AG04449 (cell line): ENCODE measurements at regions of chr2 and their contacts with region 1.

Region 1: DNA sequence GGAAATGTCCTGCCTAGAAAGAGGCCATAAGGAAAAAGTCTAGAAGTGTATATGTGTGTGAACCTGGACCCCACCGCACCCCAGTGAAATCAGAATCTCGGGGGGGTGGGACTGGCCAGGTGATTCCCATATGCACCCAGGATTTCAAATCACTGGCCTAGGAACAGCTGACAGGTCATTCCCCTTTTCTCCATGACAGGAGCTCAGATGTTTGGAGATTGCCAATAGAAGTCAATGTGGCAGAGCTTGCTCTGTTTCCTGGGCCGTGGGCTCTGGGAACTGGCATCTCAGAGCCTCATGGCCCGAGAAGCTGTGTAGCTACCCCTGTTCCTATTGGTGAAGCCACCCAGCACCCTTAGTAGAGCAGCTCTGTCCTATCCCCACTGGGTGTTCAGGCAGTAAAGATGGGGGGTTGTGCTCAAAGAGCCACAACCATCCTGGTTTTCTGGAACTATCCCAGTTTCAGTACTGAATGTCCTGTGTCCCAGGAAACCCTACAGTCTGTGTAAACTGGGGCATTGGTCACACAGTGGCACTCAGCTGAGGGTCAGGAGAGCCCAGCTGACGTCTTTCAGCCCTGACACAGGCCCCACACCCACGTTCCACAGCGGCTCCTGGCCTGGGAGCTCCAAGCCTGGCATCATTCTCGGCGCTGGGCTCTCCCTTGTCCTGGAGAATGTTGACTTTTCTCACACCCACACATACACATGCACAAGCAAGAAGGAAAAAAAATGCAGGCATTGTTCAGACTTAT is 18.9 kb downstream of the GNLY start:
- DNase-seq: no peak
- H3K4me3 ChIP-seq: no peak overlapping the region
- CTCF ChIP-seq: no peak

Region 2: GRCh38 chr2:85694052-85695025 is 18.7 kb before region 1 on chr2 and contains the start of gene GNLY:
- CTCF ChIA-PET with region 1: interaction called, 47 read pairs
- POLR2A ChIA-PET with region 1: no interaction called
- DNase-seq: no peak
- H3K4me3 ChIP-seq: no peak within 1 kb of the TSS
- CTCF ChIP-seq: no peak

Region 3: GRCh38 chr2:85758361-85759256 is 45.6 kb after region 1 on chr2:
- CTCF ChIA-PET with region 1: no interaction called
- POLR2A ChIA-PET with region 1: no interaction called
- DNase-seq: no peak
- H3K4me3 ChIP-seq: peak overlapping the region; percentile 12; the same call in 1 of the 2 replicates
- CTCF ChIP-seq: no peak

Region 4: DNA sequence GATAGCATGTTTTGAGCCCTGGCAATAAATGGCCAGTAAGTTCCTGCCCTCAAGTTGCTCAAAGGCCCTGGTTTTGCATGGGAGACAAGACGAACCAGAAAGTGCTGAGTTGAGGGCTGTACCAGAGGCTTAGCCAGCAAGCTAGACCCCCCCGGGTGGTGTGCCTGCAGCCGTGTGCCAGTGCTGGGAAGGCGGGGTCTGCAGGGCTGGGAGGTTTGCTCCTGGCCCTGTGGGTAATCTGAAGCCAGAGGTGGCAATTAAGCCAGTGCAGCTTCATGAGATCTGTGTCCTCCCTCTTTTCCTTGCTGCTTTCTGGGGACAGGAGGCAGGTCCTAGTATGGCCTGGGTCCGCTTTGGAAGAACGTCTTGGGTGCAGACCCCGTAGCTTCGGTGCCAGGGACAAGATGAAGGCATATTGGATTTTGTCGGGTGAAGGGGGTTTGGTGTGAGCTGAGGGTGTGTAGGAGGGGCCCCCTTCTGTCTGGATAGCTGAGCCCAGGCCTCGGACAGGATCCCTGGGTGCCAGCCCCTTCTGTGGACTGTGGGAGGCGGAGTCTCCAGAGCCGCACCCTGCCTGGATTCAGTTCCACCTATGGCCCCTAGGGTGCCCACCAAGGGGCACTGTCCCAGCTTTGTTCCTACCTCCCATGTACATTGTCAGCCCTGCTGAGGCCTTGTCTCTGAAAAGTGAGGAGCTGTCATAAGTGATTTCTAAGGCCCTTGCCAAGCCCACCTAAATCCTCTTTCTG is 56.4 kb after region 1 on chr2:
- CTCF ChIA-PET with region 1: no interaction called
- POLR2A ChIA-PET with region 1: no interaction called
- DNase-seq: no peak
- H3K4me3 ChIP-seq: no peak overlapping the region
- CTCF ChIP-seq: peak; percentile 35

Region 5: GRCh38 chr2:85935746-85936208 is 222.8 kb after region 1 on chr2:
- CTCF ChIA-PET with region 1: no interaction called
- POLR2A ChIA-PET with region 1: no interaction called
- DNase-seq: no peak
- H3K4me3 ChIP-seq: no peak overlapping the region
- CTCF ChIP-seq: no peak